Activated CD8-positive, alpha-beta T cell treated with anti-CD3 and anti-CD28 coated beads for 36 hours (primary cell): ENCODE measurements at regions of chr1 and their contacts with region 1.

Region 1: DNA sequence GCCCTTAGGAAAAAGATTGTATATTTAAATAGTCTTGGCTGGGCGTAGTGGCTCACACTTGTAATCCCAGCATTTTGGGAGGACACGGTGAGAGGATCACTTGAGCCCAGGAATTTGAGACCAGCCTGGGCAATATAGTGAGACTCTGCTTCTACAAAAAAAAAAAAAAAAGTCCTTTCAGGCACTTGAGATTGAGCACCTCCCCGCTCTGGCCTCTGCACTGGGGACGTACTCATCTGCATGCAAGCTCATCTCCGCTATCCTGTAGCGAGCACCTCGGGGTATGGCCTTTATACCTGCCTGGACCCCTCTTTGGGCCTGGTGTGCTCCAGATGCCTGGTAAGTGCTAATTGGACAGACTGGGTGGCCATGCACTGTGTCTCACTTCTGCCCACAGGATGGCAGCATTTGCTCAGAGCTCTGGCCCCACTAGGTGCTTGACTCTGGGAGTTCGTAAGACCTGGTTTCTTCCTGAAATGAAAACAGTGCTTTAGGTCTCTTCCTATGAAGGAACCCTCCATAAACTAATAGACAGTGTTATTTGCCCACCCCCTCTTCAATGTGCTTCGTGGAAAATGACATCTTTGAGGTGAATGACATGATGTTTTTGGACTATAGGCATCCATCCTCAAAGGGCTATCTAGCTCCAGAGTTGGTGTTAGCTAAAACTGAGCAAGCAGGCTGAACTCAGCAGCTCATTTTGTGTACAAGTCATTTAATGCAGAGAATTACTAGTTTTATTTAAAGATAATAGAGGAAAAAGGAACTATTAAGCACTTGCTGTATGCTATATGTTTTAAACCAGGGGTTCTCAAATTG is 61.7 kb upstream of the ADAR start:
- DNase-seq: peak; percentile 88
- ATAC-seq: peak; percentile 100
- H3K4me3 Mint-ChIP-seq: no peak overlapping the region
- H3K27ac Mint-ChIP-seq: no peak overlapping the region
- H3K4me1 Mint-ChIP-seq: peaks cover 11% of the 10 kb centered on the region
- H3K27me3 Mint-ChIP-seq: no peaks in the 10 kb centered on the region
- CTCF ChIP-seq: peak; percentile 78

Region 2: DNA sequence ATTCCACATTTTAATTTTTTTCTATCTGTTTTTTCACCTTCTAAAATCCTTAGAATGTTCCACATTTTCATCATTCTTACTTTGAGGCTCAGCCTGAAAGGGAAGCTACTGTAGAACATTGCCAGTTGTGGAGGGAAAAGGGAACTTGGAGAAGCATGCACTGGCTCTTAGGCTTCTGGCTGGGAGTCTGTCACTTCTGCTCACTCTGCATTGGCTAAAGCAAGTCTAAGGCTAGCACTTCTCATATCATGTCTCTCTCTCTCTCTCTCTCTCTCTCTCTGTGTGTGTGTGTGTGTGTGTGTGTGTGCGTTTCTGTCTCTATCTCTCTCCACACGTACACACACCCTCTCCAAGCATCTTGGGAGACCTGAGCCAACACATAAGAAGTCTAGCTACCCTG is 12.1 kb before region 1 on chr1:
- CTCF ChIA-PET with region 1: interaction called, 10 read pairs
- POLR2A ChIA-PET with region 1: no interaction called
- intact Hi-C with region 1: no loop called
- DNase-seq: no peak
- ATAC-seq: no peak
- H3K4me3 Mint-ChIP-seq: no peak overlapping the region
- H3K27ac Mint-ChIP-seq: no peak overlapping the region
- H3K4me1 Mint-ChIP-seq: no peaks in the 10 kb centered on the region
- H3K27me3 Mint-ChIP-seq: peaks cover 33% of the 10 kb centered on the region
- CTCF ChIP-seq: no peak

Region 3: DNA sequence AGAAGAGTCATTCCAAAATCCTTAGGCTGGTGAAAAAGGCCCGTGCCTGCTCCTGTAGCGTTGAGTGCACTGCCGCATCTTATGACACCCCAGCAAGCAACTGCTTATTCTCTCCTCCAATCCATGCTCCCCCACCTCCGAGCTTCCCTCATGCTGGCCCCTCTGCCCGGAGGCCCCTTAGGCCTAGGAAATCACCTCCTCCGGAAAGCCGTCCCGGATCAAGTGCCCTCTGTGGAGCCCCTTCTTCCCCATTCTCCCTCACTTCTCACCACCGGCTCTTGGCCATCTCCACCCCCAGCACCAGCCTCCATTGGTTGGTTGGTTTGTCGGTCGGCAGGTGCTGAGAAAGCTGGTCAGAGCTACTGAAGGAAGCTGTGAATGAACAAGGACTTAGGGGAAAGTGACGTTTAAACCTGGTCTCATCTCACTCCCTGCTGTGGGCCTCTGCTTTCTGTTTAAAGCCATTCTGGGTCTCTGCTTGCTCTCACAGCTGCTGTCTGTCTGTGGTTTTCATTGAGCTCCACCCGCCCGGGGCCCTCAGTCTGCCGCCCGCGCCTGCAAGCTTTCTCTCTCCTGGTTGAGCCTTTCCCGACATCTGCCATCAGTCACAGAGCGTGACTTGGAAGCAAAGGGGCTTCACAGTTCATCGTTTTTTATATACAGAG is 78.2 kb after region 1 on chr1:
- CTCF ChIA-PET with region 1: interaction called, 29 read pairs
- POLR2A ChIA-PET with region 1: no interaction called
- intact Hi-C with region 1: loop called (anchors 5 kb)
- DNase-seq: peak; percentile 78
- ATAC-seq: peak; percentile 84
- H3K4me3 Mint-ChIP-seq: peak overlapping the region; percentile 68
- H3K27ac Mint-ChIP-seq: peak overlapping the region; percentile 90
- H3K4me1 Mint-ChIP-seq: peaks cover 68% of the 10 kb centered on the region
- H3K27me3 Mint-ChIP-seq: no peaks in the 10 kb centered on the region
- CTCF ChIP-seq: no peak

Region 4: GRCh38 chr1:154847891-154848290 is 178.2 kb after region 1 on chr1:
- CTCF ChIA-PET with region 1: interaction called, 14 read pairs
- POLR2A ChIA-PET with region 1: no interaction called
- intact Hi-C with region 1: no loop called
- DNase-seq: no peak
- ATAC-seq: no peak
- H3K4me3 Mint-ChIP-seq: no peak overlapping the region
- H3K27ac Mint-ChIP-seq: no peak overlapping the region
- H3K4me1 Mint-ChIP-seq: peaks cover 17% of the 10 kb centered on the region
- H3K27me3 Mint-ChIP-seq: peaks cover 8% of the 10 kb centered on the region
- CTCF ChIP-seq: no peak

Region 5: DNA sequence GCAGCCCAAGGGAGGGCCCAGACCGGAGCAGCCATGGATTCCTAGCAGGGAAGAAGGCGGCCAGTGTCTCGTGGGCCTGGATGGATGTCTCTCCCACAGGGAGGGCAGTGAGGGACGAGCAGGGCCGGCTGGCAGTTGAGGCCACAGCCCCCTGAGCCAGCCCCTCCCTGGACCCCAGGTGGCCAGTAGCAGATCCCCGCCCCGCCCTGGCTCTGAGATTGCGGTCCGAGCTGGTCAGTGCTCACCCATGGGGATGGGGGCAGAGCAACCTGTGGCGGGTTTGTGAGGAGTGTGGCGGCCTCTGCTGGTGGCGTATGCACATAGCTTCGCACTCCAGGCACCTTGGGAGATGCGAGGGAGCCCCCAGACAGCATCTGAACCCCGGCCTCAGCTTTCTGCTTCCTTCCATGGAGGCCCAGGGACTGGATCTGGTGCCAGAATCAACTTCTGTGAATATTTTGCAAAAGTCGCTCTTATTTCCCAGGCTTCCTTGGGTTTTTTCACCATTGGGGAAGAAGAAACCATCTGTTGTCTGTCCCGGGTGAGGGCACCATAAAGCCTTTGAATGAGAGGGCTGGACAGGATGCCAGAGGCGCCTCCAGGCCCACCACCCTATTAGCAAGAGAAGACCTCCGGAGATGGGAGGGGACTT is 208.8 kb after region 1 on chr1:
- CTCF ChIA-PET with region 1: interaction called, 28 read pairs
- POLR2A ChIA-PET with region 1: interaction called, 3 read pairs
- intact Hi-C with region 1: loop called (anchors 5 kb)
- DNase-seq: peak; percentile 84
- ATAC-seq: peak; percentile 99
- H3K4me3 Mint-ChIP-seq: no peak overlapping the region
- H3K27ac Mint-ChIP-seq: no peak overlapping the region
- H3K4me1 Mint-ChIP-seq: peaks cover 4% of the 10 kb centered on the region
- H3K27me3 Mint-ChIP-seq: peaks cover 1% of the 10 kb centered on the region
- CTCF ChIP-seq: peak; percentile 84